ENCODE measurements at regions of chr3 and their contacts with region 1.

Region 1: DNA sequence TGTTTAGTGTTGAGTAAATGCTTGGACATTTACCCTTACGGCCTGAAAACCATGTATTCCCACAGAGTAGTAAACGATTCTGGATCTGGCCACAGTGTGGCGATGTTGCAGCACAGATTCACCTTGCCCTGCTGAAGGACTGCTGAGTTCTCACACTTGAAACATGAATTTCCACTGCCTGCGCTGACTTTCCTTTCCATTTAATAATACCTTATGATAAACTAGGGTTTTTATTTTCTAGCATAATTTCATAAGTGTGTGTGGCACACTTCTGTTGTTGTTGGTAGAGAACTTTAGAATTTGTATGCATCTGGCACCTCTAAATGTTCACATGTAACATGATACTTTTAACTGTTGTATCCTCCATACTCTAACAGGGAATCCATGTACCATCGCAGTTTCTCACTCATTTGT is 53.9 kb downstream of the C3orf38 start:
- DNase-seq: peak; percentile 33 to 67 (median 36)
- ATAC-seq: peak; percentile 93
- H3K4me3 ChIP-seq: no peak overlapping the region
- H3K27ac ChIP-seq: no peak overlapping the region
- H3K4me1 ChIP-seq: no peaks in the 10 kb centered on the region
- H3K27me3 ChIP-seq: no peaks in the 10 kb centered on the region
- CTCF ChIP-seq: peak; percentile 69 to 76 (median 73)
- EP300 ChIP-seq: no peak
- POLR2A ChIP-seq: no peak
- RAD21 ChIP-seq: peak; percentile 58 to 82

Region 2: DNA sequence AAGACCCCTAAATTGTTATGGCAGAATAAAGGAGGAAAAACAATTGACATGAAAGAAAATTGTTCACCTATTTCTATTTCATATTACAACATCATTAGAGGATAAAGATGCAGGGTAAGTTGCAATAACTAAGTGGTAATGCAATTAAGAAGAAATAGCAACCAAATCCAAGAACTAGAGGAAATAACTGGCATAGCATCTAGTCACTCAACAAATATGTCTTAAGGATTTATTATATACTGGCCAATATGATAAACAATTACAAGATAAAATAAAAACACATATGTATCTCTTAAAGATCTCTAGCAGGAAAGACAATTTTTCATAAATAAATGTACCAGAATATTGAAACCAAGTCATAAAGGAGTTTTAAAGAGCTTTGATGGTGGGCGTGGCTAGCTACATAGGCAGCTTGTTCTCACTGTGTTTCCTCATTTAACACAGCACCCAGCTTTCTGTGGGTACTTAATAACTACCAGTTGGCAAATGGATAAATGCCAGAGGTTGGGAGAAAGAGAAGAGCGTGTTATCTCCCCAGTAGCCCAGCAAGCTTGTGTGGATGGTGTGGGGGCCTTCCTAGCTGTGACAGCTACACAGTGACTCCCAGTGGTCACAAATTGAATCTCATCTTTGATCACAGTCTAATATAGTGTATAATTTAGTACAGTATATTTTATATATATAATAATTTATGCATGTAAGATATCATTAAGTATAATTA is 1887.7 kb after region 1 on chr3:
- CTCF ChIA-PET with region 1: no interaction called
- POLR2A ChIA-PET with region 1: no interaction called
- in situ Hi-C with region 1: loop called (anchors 25 kb)
- intact Hi-C with region 1: no loop called
- DNase-seq: peak in 2 of 4 experiments; percentile 4
- ATAC-seq: no peak
- H3K4me3 ChIP-seq: no peak overlapping the region
- H3K27ac ChIP-seq: no peak overlapping the region
- H3K4me1 ChIP-seq: no peaks in the 10 kb centered on the region
- H3K27me3 ChIP-seq: no peaks in the 10 kb centered on the region
- CTCF ChIP-seq: peak in 1 of 3 experiments; percentile 24; a peak in 1 of 6 replicates
- EP300 ChIP-seq: no peak
- POLR2A ChIP-seq: no peak
- RAD21 ChIP-seq: peak in 1 of 2 experiments; percentile 18; a peak in 1 of 4 replicates

Region 3: GRCh38 chr3:90184861-90185260 is 1981.2 kb after region 1 on chr3:
- CTCF ChIA-PET with region 1: no interaction called
- POLR2A ChIA-PET with region 1: no interaction called
- in situ Hi-C with region 1: no loop called
- intact Hi-C with region 1: loop called (anchors 10 kb)
- DNase-seq: no peak
- ATAC-seq: no peak
- H3K4me3 ChIP-seq: no peak overlapping the region
- H3K27ac ChIP-seq: no peak overlapping the region
- H3K4me1 ChIP-seq: no peaks in the 10 kb centered on the region
- H3K27me3 ChIP-seq: no peaks in the 10 kb centered on the region
- CTCF ChIP-seq: no peak
- EP300 ChIP-seq: no peak
- POLR2A ChIP-seq: no peak
- RAD21 ChIP-seq: no peak

Measured in K562 (cell line).